ENCODE measurements at regions of chr3 and their contacts with region 1.

Region 1: DNA sequence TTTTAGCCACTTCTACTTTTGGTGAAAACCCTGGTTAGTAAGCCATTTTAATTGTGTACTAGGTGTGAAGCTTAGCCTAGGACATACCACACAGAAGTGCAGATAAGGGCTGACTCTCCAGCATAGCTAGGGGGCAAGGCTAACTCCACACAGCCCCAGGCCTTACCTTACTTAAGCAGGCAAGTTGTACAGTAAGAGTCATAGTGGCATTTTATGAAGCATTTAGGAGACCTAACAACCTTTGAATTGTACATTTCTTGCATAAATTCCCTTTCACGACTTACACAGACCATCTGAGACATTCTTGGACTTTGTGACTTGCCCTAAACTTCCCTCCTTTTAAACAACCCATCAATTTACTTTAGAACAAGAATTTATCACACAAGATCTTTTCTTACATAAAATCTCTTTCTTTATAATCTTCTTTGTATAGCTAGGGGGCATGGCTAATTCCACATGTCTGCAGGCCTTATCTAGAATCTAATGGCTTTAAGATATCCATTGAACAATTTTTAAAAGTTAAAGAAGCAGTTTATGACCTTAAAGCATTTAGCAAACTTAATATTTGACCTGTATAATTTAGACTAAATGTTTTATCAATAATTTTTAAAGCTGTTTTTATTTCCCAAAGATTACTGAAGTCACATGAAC is 18.7 kb upstream of the SKIL start:
- DNase-seq: no peak
- H3K4me3 ChIP-seq: no peak overlapping the region
- CTCF ChIP-seq: no peak

Region 2: GRCh38 chr3:170387950-170388349 is 49.1 kb after region 1 on chr3:
- in situ Hi-C with region 1: loop called (anchors 5 kb)
- DNase-seq: no peak
- H3K4me3 ChIP-seq: no peak overlapping the region
- CTCF ChIP-seq: no peak

Region 3: GRCh38 chr3:170553788-170554757 is 215.3 kb after region 1 on chr3:
- in situ Hi-C with region 1: no loop called
- DNase-seq: no peak
- H3K4me3 ChIP-seq: no peak overlapping the region
- CTCF ChIP-seq: no peak